Activated naive CD8-positive, alpha-beta T cell treated with anti-CD3 and anti-CD28 coated beads, Interleukin-2, amount 10 ng/mL, durations not matched to agents 7 days and 5 days (primary cell): ENCODE measurements at regions of chr5 and their contacts with region 1.

Region 1: DNA sequence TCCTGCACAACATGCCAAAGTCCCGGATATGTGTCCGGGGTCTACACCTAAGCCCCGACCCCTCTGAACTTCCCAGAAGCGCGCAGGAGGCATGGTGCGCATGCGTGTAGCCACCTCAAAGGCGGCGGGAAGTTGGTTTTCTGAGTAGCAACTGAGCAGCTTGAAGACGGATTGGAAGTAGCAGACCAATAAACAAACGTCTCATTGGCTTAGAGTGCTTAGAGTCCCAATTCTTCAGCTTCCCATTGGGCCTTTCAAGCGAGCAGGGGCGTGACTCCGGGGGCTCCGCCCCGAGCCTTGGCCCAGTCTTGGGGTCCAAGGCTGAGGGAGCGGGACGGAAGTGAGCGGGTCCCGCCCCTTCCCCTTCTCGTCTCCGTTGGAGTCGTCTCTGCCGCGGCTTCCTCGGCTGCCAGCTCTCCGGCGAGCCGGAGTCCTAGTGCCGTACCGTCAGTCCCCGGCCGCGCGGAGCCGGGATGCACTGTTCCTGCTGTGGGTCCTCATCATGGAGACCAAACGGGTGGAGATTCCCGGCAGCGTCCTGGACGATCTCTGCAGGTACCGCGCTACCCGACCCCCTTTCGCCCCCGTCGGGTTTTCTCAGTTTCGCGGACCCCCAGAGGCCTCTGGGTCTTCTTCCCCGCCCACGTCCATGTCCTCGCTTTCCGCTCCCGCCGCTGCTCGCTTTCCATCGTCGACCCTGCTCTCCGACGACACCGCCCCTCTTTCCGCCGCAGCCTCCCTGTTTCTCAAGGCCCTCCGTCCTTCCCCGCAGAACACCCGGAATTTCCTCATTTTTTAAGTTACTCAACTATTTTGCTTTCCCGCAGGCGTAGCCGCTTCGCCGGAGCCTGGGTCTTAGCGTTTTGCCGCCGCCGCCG is at the start of gene DCP2:
- DNase-seq: peak; percentile 96
- ATAC-seq: peak; percentile 97
- H3K4me3 Mint-ChIP-seq: peak within 1 kb of the TSS; percentile 96
- H3K27ac Mint-ChIP-seq: peak within 1 kb of the TSS; percentile 95
- H3K4me1 Mint-ChIP-seq: peaks cover 31% of the 10 kb centered on the region
- H3K27me3 Mint-ChIP-seq: no peaks in the 10 kb centered on the region
- total RNA-seq, gene DCP2: 106 to 113 TPM

Region 2: GRCh38 chr5:112860929-112861637 is 115.6 kb before region 1 on chr5 and contains the start of gene SRP19:
- POLR2A ChIA-PET with region 1: interaction called, 12 read pairs
- DNase-seq: peak; percentile 88
- ATAC-seq: peak; percentile 95
- H3K4me3 Mint-ChIP-seq: peak within 1 kb of the TSS; percentile 96
- H3K27ac Mint-ChIP-seq: peak within 1 kb of the TSS; percentile 94
- H3K4me1 Mint-ChIP-seq: peaks cover 24% of the 10 kb centered on the region
- H3K27me3 Mint-ChIP-seq: peaks cover 20% of the 10 kb centered on the region
- total RNA-seq, gene SRP19: 51.2 to 57.0 TPM

Region 3: GRCh38 chr5:112878760-112879159 is 97.9 kb before region 1 on chr5:
- POLR2A ChIA-PET with region 1: interaction called, 12 read pairs
- DNase-seq: no peak
- ATAC-seq: peak; percentile 88
- H3K4me3 Mint-ChIP-seq: peak overlapping the region; percentile 66
- H3K27ac Mint-ChIP-seq: peak overlapping the region; percentile 83
- H3K4me1 Mint-ChIP-seq: peaks cover 43% of the 10 kb centered on the region
- H3K27me3 Mint-ChIP-seq: no peaks in the 10 kb centered on the region

Region 4: DNA sequence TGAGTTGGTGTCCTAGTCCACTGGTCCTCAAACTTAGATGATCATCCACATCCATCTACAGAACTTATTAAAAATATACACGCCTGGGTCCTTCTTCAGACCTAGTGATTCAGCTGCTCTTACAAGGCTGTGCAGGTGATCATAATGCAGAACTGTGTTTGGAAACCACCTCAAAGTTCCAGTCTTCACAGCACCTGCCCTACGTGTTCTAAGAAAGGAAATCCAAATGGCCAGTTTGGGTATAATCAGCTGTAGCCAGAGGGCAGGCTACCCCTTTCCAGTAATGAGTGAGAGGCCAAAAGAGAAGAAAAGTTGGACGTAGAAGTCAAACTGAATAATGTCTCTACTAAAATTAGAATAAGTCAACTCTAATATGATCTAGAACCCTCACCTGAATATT is 70.0 kb before region 1 on chr5:
- POLR2A ChIA-PET with region 1: no interaction called
- DNase-seq: no peak
- ATAC-seq: no peak
- H3K4me3 Mint-ChIP-seq: no peak overlapping the region
- H3K27ac Mint-ChIP-seq: no peak overlapping the region
- H3K4me1 Mint-ChIP-seq: peaks cover 7% of the 10 kb centered on the region
- H3K27me3 Mint-ChIP-seq: no peaks in the 10 kb centered on the region

Region 5: GRCh38 chr5:112921833-112922817 is 54.5 kb before region 1 on chr5 and contains the start of gene REEP5:
- POLR2A ChIA-PET with region 1: interaction called, 33 read pairs
- DNase-seq: peak; percentile 95
- ATAC-seq: peak; percentile 82
- H3K4me3 Mint-ChIP-seq: peak within 1 kb of the TSS; percentile 93
- H3K27ac Mint-ChIP-seq: peak within 1 kb of the TSS; percentile 95
- H3K4me1 Mint-ChIP-seq: peaks cover 51% of the 10 kb centered on the region
- H3K27me3 Mint-ChIP-seq: no peaks in the 10 kb centered on the region
- total RNA-seq, gene REEP5: 59.0 to 65.8 TPM

Region 6: GRCh38 chr5:112930082-112930344 is 46.7 kb before region 1 on chr5:
- POLR2A ChIA-PET with region 1: interaction called, 13 read pairs
- DNase-seq: no peak
- ATAC-seq: peak; percentile 80
- H3K4me3 Mint-ChIP-seq: peak overlapping the region; percentile 70
- H3K27ac Mint-ChIP-seq: peak overlapping the region; percentile 88
- H3K4me1 Mint-ChIP-seq: peaks cover 46% of the 10 kb centered on the region
- H3K27me3 Mint-ChIP-seq: no peaks in the 10 kb centered on the region